IMR-90 (cell line): ENCODE measurements at regions of chr9 and their contacts with region 1.

Region 1: DNA sequence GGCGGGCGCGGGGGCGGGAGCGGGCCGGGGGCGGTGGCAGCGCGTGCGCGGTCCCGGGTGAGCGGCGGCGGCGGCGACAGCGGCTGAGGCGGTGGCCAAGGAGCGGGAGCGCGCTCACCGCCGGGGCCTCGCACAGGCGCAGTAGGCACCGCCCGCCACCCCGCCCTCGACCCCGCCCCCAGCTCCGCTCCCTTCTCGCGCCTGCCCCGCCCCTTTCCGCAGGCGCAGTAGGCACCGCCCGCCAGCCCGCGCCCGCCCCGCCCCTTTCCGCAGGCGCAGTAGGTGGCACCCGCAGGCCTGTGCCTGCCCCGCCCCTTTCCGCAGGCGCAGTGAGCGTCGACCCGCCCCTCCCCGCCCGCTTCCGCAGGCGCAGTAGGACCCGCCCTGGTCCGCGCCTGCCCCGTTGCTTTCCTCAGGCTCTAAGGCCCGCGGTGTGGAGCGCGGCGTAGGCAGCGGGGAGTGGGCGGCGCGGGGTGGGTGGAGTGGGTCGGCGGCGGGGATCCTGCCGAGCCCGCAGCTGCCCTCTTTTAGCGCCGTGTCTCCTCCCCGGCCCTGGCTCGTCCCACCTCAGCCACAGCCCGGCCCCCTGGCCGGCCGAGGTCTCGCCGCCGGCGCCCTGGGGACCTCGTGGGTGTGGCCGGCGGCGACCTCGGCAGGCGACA is at the start of gene CAMSAP1:
- DNase-seq: peak; percentile 90
- ATAC-seq: peak; percentile 93
- H3K4me3 ChIP-seq: peak within 1 kb of the TSS; percentile 83
- H3K27ac ChIP-seq: peak within 1 kb of the TSS; percentile 78
- H3K4me1 ChIP-seq: peaks cover 10% of the 10 kb centered on the region
- H3K27me3 ChIP-seq: no peaks in the 10 kb centered on the region
- CTCF ChIP-seq: no peak
- POLR2A ChIP-seq: 0 out of 2 replicates have a peak, but pooled peaks have one; percentile 28
- RAD21 ChIP-seq: no peak
- total RNA-seq, gene CAMSAP1: 19.5 and 21.1 TPM in 2 replicates

Region 2: GRCh38 chr9:135857371-135857786 is 50.2 kb before region 1 on chr9:
- CTCF ChIA-PET with region 1: no interaction called
- POLR2A ChIA-PET with region 1: no interaction called
- dilution Hi-C with region 1: no loop called
- in situ Hi-C with region 1: loop called (anchors 5 kb)
- intact Hi-C with region 1: no loop called
- DNase-seq: peak; percentile 72
- ATAC-seq: peak; percentile 75
- H3K4me3 ChIP-seq: no peak overlapping the region
- H3K27ac ChIP-seq: no peak overlapping the region
- H3K4me1 ChIP-seq: peaks cover 13% of the 10 kb centered on the region; the same call in 1 of the 2 replicates
- H3K27me3 ChIP-seq: no peaks in the 10 kb centered on the region
- CTCF ChIP-seq: no peak
- POLR2A ChIP-seq: no peak
- RAD21 ChIP-seq: no peak

Region 3: GRCh38 chr9:135864447-135865049 is 43.0 kb before region 1 on chr9:
- CTCF ChIA-PET with region 1: no interaction called
- POLR2A ChIA-PET with region 1: interaction called, 8 read pairs
- dilution Hi-C with region 1: no loop called
- in situ Hi-C with region 1: loop called (anchors 5 kb)
- intact Hi-C with region 1: loop called (anchors 2 kb)
- DNase-seq: peak; percentile 43
- ATAC-seq: peak; percentile 88
- H3K4me3 ChIP-seq: no peak overlapping the region
- H3K27ac ChIP-seq: no peak overlapping the region
- H3K4me1 ChIP-seq: peaks cover 2% of the 10 kb centered on the region
- H3K27me3 ChIP-seq: no peaks in the 10 kb centered on the region
- CTCF ChIP-seq: peak; percentile 72
- POLR2A ChIP-seq: no peak
- RAD21 ChIP-seq: peak; percentile 62

Region 4: GRCh38 chr9:135978642-135979546 is 71.3 kb after region 1 on chr9:
- CTCF ChIA-PET with region 1: no interaction called
- POLR2A ChIA-PET with region 1: no interaction called
- dilution Hi-C with region 1: no loop called
- in situ Hi-C with region 1: no loop called
- intact Hi-C with region 1: no loop called
- DNase-seq: no peak
- ATAC-seq: no peak; the same call in 1 of the 2 replicates
- H3K4me3 ChIP-seq: no peak overlapping the region
- H3K27ac ChIP-seq: no peak overlapping the region
- H3K4me1 ChIP-seq: peaks cover 7% of the 10 kb centered on the region; the same call in 1 of the 2 replicates
- H3K27me3 ChIP-seq: peaks cover 18% of the 10 kb centered on the region
- CTCF ChIP-seq: no peak
- POLR2A ChIP-seq: no peak
- RAD21 ChIP-seq: no peak